Calu3 (cell line): ENCODE measurements at regions of chr14 and their contacts with region 1.

Region 1: GRCh38 chr14:67526676-67527459 is 6.2 kb upstream of the PLEKHH1 start:
- DNase-seq: peak; percentile 45
- H3K4me3 Mint-ChIP-seq: no peak overlapping the region
- H3K27ac Mint-ChIP-seq: no peak overlapping the region
- H3K4me1 Mint-ChIP-seq: peaks cover 7% of the 10 kb centered on the region
- H3K27me3 Mint-ChIP-seq: peaks cover 75% of the 10 kb centered on the region
- CTCF ChIP-seq: peak; percentile 90

Region 2: GRCh38 chr14:67426983-67427606 is 99.8 kb before region 1 on chr14:
- CTCF ChIA-PET with region 1: interaction called, 20 read pairs
- intact Hi-C with region 1: loop called (anchors 5 kb)
- DNase-seq: peak; percentile 77
- H3K4me3 Mint-ChIP-seq: no peak overlapping the region
- H3K27ac Mint-ChIP-seq: no peak overlapping the region
- H3K4me1 Mint-ChIP-seq: peaks cover 12% of the 10 kb centered on the region
- H3K27me3 Mint-ChIP-seq: peaks cover 14% of the 10 kb centered on the region
- CTCF ChIP-seq: peak; percentile 63

Region 3: DNA sequence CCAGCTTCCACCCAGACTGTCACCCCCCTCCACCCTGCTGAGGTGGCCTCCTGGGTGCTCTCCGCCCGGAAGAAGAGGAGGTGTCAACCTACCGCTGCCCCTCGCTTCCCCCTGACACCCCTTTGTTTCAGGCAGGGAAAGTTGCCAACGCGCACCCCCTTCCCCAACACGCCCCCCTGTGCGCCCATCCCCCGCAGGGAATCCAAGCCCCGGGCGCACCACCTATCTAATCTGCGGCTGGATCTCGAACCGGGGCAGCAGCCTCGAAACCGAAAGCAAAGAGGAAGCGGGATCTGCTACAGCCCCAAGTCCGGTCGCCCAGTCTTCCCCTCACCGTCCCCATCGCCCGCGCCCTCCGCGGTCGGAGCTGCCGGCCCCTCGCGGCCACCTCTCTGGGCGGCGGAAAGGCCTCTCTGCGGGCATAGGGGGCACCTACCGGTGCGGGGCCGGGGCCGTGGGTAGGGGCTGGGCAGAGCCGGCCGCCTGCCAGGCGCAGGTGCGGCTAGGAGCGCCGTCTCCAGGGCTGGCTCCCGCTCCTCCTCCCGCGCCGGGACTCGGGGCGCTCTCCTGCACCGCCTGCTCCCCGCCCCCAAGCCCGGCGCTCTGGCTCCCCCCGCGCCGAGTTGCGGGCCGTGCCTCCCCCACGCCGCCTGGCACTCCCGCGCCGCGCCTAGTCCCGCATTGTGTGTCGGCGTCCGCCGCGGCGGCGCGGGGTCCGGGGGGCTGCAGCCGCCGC is 12.1 kb before region 1 on chr14:
- CTCF ChIA-PET with region 1: interaction called, 23 read pairs
- intact Hi-C with region 1: no loop called
- DNase-seq: peak; percentile 40
- H3K4me3 Mint-ChIP-seq: peak overlapping the region; percentile 77
- H3K27ac Mint-ChIP-seq: no peak overlapping the region
- H3K4me1 Mint-ChIP-seq: no peaks in the 10 kb centered on the region
- H3K27me3 Mint-ChIP-seq: peaks cover 58% of the 10 kb centered on the region
- CTCF ChIP-seq: no peak

Region 4: DNA sequence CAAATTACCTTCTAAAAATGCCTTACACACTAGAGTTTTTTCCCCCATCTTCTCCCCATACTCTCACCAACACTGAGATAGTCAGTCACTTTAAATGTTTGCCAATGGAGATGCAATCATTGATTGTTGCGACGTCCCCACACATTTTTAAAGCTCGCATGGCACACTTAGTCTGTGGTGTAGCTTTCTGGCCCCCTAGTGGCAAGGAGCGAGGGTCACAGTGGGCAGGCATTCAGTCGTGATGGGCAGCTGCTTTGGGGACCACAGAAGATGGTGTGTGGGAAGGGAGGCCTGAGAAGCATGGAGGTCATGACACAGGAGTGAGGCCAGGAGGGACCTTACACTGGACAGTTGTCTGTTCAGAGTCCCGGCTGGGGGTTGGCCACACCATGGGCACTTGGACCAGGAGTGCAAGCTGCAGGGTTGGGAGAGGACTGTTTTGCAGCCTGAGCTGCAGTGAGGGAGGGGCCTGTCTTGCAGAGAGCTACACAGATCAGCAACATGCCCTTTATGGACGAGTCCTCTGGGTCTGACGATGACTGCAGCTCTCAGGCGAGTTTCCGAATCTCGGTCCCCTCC is 44.5 kb after region 1 on chr14:
- CTCF ChIA-PET with region 1: interaction called, 59 read pairs
- intact Hi-C with region 1: loop called (anchors 1 kb)
- DNase-seq: peak; percentile 68
- H3K4me3 Mint-ChIP-seq: no peak overlapping the region
- H3K27ac Mint-ChIP-seq: no peak overlapping the region
- H3K4me1 Mint-ChIP-seq: peaks cover 9% of the 10 kb centered on the region
- H3K27me3 Mint-ChIP-seq: no peaks in the 10 kb centered on the region
- CTCF ChIP-seq: peak; percentile 73

Region 5: DNA sequence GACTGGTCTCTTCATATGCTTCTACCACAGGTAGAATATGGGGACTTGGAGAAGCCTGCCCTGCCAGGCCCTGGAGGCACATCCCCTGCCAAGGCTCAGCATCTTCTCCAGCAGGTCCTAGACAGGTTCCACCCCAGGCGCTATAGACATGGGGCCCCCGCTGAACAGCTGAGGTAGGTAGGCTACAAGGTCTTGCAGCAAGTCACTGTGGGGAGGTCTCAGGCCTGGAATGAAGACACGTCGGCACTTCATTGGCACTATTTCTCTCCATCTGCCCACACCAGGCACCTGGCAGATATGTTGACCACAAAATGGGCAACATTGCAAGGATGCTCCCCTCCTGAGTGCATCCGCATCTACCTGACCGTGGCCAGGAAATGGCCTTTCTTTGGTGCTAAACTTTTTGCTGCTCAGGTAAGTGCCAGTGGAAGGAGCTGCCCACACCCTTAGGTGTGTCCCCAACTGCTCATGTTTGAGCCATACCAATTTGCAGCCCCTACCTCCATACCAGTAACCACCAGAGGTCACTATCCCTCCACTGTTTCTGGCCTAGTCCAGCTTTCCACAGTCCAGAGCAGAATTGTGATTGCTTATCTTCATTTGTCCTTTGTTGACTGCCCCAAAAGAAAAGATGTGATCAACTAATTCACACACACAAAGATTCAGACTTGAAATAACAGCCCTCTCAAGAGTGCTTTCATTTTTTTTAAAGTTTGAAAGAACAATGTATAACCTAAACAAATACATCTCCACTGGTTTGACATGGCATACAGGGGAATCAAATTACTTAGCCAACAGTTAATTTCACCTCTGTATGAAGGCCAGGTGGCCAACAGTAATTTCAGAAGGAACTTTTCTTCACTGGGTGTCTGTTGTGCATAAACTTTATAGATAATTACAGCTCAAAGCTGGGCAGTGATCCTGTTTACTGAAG is 57.1 kb after region 1 on chr14:
- CTCF ChIA-PET with region 1: interaction called, 11 read pairs
- intact Hi-C with region 1: no loop called
- DNase-seq: peak; percentile 70
- H3K4me3 Mint-ChIP-seq: no peak overlapping the region
- H3K27ac Mint-ChIP-seq: no peak overlapping the region
- H3K4me1 Mint-ChIP-seq: no peaks in the 10 kb centered on the region
- H3K27me3 Mint-ChIP-seq: no peaks in the 10 kb centered on the region
- CTCF ChIP-seq: peak; percentile 45

Region 6: GRCh38 chr14:67636361-67636919 is 109.6 kb after region 1 on chr14:
- CTCF ChIA-PET with region 1: no interaction called
- intact Hi-C with region 1: no loop called
- DNase-seq: no peak
- H3K4me3 Mint-ChIP-seq: no peak overlapping the region
- H3K27ac Mint-ChIP-seq: no peak overlapping the region
- H3K4me1 Mint-ChIP-seq: no peaks in the 10 kb centered on the region
- H3K27me3 Mint-ChIP-seq: no peaks in the 10 kb centered on the region
- CTCF ChIP-seq: no peak

Region 7: DNA sequence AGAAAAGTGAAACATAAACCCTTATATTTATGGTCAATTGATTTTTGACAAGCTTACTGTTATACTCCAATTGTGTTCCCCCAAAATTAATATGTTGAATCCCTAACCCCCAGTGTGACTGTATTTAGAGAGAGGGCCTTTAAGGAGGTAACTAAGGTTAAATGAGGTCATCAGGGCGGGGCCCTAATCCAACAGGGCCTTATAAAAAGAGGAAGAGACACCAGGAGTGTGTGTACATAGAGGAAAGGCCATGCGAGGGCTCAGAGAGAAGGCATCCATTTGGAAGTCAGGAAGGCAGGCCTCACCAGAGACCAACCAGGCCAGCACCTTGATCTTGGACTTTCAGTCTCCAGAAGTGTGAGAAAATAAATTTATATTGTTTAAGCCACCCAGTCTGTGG is 154.1 kb after region 1 on chr14:
- CTCF ChIA-PET with region 1: no interaction called
- intact Hi-C with region 1: no loop called
- DNase-seq: no peak
- H3K4me3 Mint-ChIP-seq: no peak overlapping the region
- H3K27ac Mint-ChIP-seq: no peak overlapping the region
- H3K4me1 Mint-ChIP-seq: peaks cover 29% of the 10 kb centered on the region
- H3K27me3 Mint-ChIP-seq: no peaks in the 10 kb centered on the region
- CTCF ChIP-seq: no peak